IMR-90 (cell line): ENCODE measurements at regions of chr4 and their contacts with region 1.

Region 1: GRCh38 chr4:48792348-48793006 is 12.4 kb upstream of the FRYL start:
- DNase-seq: no peak
- ATAC-seq: no peak
- H3K4me3 ChIP-seq: no peak overlapping the region
- H3K27ac ChIP-seq: no peak overlapping the region
- H3K4me1 ChIP-seq: no peaks in the 10 kb centered on the region
- H3K27me3 ChIP-seq: no peaks in the 10 kb centered on the region
- CTCF ChIP-seq: no peak
- POLR2A ChIP-seq: no peak
- RAD21 ChIP-seq: no peak

Region 2: DNA sequence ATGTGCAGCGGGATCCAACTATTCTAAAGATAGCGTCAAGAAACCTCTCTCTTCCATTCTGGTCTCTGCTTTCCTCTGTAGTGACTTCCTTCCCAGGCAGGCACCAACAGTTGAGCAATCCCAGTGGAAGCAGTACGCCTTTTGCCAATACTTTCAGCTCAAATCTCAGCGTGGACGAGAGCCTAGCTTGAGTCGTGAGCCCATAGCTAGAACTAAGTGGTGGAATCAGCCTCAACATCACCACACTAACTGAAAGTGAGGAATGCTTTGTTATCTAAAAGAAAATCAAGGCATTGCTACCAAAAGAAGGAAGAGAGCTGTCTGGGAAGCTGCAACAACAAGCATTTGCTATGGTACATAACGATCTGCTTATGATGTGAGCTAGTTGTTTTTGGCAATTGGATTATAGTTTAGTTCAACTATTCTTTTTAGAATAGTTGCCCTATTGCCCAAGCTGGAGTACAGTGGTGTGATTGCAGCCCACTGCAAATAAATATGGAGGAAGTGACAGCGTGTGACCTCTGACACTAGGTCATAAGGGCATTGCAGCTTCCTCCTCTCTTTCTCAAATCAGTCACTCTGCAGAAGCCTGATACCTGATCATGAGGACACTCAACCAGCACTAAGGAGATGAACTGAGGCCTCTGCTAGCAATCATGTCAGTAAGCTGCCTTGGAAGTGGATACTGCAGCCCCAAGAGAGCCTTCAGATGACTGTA is 12.3 kb after region 1 on chr4:
- CTCF ChIA-PET with region 1: no interaction called
- POLR2A ChIA-PET with region 1: no interaction called
- dilution Hi-C with region 1: no loop called
- in situ Hi-C with region 1: no loop called
- intact Hi-C with region 1: loop called (anchors 1 kb)
- DNase-seq: no peak
- ATAC-seq: peak; percentile 42; the same call in 1 of the 2 replicates
- H3K4me3 ChIP-seq: no peak overlapping the region
- H3K27ac ChIP-seq: no peak overlapping the region
- H3K4me1 ChIP-seq: peaks cover 2% of the 10 kb centered on the region; the same call in 1 of the 2 replicates
- H3K27me3 ChIP-seq: no peaks in the 10 kb centered on the region
- CTCF ChIP-seq: no peak
- POLR2A ChIP-seq: no peak
- RAD21 ChIP-seq: no peak